ENCODE measurements at regions of chr11 and their contacts with region 1.

Region 1: GRCh38 chr11:57761301-57762234 is at the start of gene CTNND1:
- H3K4me3 ChIP-seq: peak within 1 kb of the TSS; percentile 50
- H3K27ac ChIP-seq: peak within 1 kb of the TSS; percentile 86
- H3K4me1 ChIP-seq: peaks cover 8% of the 10 kb centered on the region; the same call in 1 of the 2 replicates
- CTCF ChIP-seq: no peak

Region 2: GRCh38 chr11:57597916-57598830 is 163.4 kb before region 1 on chr11:
- CTCF ChIA-PET with region 1: no interaction called
- POLR2A ChIA-PET with region 1: no interaction called
- H3K4me3 ChIP-seq: peak overlapping the region; percentile 26
- H3K27ac ChIP-seq: no peak overlapping the region
- H3K4me1 ChIP-seq: no peaks in the 10 kb centered on the region
- CTCF ChIP-seq: no peak

Region 3: DNA sequence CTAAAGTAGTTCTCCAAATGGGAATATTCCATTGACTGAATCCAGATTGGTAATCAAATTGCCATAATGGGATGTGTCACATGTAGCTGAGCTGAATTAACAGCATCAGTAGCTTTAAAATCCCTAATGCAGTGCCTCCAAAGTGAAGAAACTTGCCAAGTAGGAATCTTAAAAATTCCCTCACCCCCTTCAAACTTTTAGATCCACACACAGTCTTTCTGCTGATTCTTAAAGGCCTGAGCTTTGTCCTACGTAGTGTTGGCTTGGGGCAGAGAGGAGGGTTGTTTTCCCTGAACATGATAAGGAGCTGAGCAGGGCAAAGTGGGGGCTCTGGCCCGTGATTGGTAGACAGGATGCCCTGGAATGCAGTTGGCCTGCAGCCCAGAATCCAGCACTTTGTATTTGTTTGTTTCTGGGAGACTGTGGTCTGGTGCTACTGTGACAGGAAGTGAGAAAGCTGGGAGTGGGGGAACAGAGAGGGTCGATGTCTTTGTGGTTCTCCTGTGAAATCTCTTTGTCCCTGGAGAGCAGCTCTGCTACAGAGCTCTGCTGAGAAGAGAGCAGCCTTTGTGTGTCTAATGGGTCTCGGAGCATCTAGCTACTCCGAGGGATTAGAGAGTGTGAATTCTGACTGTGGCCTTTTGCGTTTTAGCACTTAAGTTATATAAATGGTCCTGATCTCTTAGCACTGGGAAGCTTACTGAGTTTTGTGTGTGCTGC is 16.9 kb after region 1 on chr11:
- CTCF ChIA-PET with region 1: interaction called, 10 read pairs
- POLR2A ChIA-PET with region 1: interaction called, 50 read pairs
- H3K4me3 ChIP-seq: peak overlapping the region; percentile 18
- H3K27ac ChIP-seq: peak overlapping the region; percentile 50
- H3K4me1 ChIP-seq: peaks cover 12% of the 10 kb centered on the region; the same call in 1 of the 2 replicates
- CTCF ChIP-seq: no peak

Measured in HEK293 (cell line).